ENCODE measurements at regions of chr12 and their contacts with region 1.

Region 1: DNA sequence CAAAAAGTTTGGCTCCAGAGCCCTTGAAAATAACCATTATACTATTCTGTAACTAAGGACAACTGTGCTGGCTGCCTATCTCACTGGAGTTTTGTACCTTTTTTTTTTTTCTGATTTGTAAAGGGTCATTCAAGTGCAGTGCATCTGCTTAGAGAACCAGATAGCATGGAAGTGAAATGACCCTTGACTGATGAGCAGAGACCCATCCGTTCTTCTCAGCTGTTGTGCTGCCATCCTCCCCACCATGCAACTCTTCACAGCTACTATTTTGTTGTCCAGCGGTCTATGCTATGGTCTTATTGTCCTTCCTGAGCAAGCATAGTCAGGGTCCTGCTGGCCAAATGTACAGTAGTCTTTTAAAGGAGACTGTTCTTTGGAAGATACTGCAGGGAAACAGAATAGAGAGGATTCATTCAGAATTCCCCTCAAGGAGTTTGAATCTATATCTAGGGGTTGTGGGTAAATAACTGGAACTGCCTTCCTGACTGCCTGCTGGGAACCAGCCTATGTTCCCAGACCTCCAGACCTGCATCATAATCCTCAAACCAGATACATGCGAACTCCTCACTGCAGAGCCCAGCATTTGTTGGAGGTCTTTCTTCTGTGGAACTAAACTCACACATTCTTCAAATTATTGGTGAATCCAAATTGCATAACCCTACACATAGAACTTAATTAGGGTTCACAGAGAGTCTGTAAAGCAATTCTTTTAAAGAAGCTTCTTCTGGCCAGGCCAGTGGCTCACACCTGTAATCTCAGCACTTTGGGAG is 41.1 kb downstream of the GPR19 start:
- DNase-seq: no peak
- H3K4me3 ChIP-seq: no peak overlapping the region
- CTCF ChIP-seq: no peak

Region 2: GRCh38 chr12:12356886-12357718 is 297.8 kb before region 1 on chr12 and contains the start of gene BORCS5:
- CTCF ChIA-PET with region 1: interaction called, 13 read pairs
- POLR2A ChIA-PET with region 1: no interaction called
- DNase-seq: peak; percentile 29
- H3K4me3 ChIP-seq: peak within 1 kb of the TSS; percentile 89
- CTCF ChIP-seq: peak; percentile 39

Region 3: DNA sequence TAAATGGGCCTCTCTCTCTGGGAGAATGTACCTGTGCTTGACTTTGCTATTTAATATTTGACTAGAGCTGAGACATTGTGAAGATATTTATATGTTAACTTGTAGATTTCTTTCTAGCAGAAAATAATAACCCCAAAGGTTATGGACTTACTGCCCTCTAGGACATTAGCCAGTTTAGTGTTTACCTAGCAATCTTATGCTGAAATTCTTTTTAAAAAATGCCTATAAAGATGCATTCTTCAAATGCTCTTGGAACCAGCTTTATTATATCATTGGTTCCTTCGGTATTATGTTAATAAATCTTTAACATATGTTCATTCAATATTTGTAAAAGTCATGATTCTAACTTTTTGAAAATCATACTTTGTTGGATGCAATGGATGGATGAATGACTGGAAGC is 13.1 kb after region 1 on chr12:
- CTCF ChIA-PET with region 1: interaction called, 14 read pairs
- POLR2A ChIA-PET with region 1: no interaction called
- DNase-seq: no peak
- H3K4me3 ChIP-seq: no peak overlapping the region
- CTCF ChIP-seq: no peak

Measured in AG04449 (cell line).